Mammary epithelial cell (primary cell): ENCODE measurements at regions of chr1 and their contacts with region 1.

Region 1: GRCh38 chr1:231590453-231591198 is 36.0 kb upstream of the DISC1 start:
- DNase-seq: peak; percentile 51
- H3K4me3 ChIP-seq: no peak overlapping the region
- H3K27ac ChIP-seq: no peak overlapping the region
- H3K4me1 ChIP-seq: no peaks in the 10 kb centered on the region
- H3K27me3 ChIP-seq: no peaks in the 10 kb centered on the region
- CTCF ChIP-seq: peak; percentile 71 to 80

Region 2: GRCh38 chr1:231315887-231316286 is 274.7 kb before region 1 on chr1:
- CTCF ChIA-PET with region 1: no interaction called
- dilution Hi-C with region 1: no loop called
- in situ Hi-C with region 1: no loop called
- intact Hi-C with region 1: loop called (anchors 1 kb)
- DNase-seq: peak; percentile 8
- H3K4me3 ChIP-seq: no peak overlapping the region
- H3K27ac ChIP-seq: no peak overlapping the region
- H3K4me1 ChIP-seq: no peaks in the 10 kb centered on the region
- H3K27me3 ChIP-seq: no peaks in the 10 kb centered on the region
- CTCF ChIP-seq: peak; percentile 35 to 67

Region 3: DNA sequence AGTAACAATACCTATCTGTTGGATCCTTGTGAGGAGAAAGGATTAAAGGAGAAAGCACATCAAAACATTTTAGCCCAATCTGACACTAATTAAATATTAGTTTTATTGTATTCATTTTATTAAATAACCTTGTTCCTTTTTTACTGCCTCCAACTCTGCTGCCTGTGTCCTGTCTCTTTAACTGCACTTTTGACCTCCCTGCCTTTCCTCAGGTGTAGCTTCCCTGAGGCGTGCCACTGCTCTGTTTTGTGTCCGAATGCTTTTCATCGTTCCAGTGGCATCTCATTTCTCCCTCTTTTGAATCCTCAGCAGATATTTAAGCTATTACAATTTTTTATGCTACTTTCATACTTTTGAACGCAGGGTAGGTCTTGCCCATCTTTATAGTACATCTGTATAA is 242.2 kb before region 1 on chr1:
- CTCF ChIA-PET with region 1: no interaction called
- dilution Hi-C with region 1: no loop called
- in situ Hi-C with region 1: loop called in 1 of 2 experiments (anchors 5 kb)
- intact Hi-C with region 1: no loop called
- DNase-seq: no peak
- H3K4me3 ChIP-seq: no peak overlapping the region
- H3K27ac ChIP-seq: no peak overlapping the region
- H3K4me1 ChIP-seq: no peaks in the 10 kb centered on the region
- H3K27me3 ChIP-seq: no peaks in the 10 kb centered on the region
- CTCF ChIP-seq: no peak

Region 4: DNA sequence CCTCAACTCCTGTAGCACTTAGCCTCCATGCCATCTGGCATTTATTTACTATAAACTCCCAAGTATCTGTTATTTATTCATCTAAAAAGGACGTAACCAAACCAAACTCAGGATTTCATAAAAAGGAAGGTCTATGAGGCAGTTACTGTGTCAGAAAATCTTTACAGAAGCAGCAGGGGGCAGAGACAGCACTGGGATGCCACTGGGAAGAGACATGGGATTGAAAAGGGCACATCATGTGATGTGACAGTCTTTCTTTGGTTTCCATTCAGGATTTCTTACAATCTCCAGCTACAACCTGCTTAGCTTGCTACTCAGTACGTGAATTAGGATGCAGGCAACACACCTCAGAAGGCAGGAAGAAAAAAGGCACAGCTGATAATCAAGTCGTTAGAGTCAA is 221.3 kb before region 1 on chr1:
- CTCF ChIA-PET with region 1: no interaction called
- dilution Hi-C with region 1: no loop called
- in situ Hi-C with region 1: no loop called
- intact Hi-C with region 1: loop called (anchors 1 kb)
- DNase-seq: no peak
- H3K4me3 ChIP-seq: no peak overlapping the region
- H3K27ac ChIP-seq: no peak overlapping the region
- H3K4me1 ChIP-seq: no peaks in the 10 kb centered on the region
- H3K27me3 ChIP-seq: no peaks in the 10 kb centered on the region
- CTCF ChIP-seq: peak in 1 of 2 donors; percentile 28

Region 5: DNA sequence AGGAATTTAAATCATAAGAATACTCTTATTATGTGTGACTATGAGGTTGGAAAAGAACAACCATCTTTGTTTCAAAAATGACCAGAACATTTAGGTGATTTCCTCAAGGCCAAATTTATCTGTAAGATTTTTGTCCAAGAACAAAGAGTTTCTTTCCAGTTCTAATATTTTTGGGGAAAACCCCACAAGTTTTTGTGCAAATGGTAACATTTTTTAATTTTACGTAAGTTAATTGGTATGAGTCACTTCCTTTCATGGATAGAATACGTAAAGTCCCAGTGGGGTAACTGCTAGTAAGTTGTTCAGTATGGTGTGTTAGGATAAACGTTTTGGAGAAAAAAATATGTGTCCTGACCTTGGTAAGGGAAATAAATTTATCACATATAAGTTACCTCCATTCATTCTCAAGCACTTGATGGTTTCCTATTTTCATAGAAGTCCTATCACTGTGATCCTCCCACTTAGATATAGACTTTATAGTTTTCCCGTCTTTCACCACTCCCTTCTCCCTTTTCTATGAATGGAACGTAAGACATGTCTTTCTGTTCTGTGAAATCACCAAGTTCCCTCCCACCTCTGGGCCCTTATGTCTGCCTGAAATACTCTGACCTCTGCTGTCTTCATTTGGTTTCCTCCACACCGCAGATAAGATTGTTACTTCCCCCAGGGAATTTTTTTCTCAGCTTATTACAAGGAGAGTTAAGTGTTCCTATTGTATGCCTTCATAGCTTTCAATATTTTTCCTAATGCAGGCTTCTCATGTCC is 97.0 kb before region 1 on chr1:
- CTCF ChIA-PET with region 1: no interaction called
- dilution Hi-C with region 1: no loop called
- in situ Hi-C with region 1: no loop called
- intact Hi-C with region 1: no loop called
- DNase-seq: peak; percentile 29
- H3K4me3 ChIP-seq: no peak overlapping the region
- H3K27ac ChIP-seq: no peak overlapping the region
- H3K4me1 ChIP-seq: no peaks in the 10 kb centered on the region
- H3K27me3 ChIP-seq: no peaks in the 10 kb centered on the region
- CTCF ChIP-seq: no peak

Region 6: GRCh38 chr1:231702801-231703395 is 112.3 kb after region 1 on chr1:
- CTCF ChIA-PET with region 1: no interaction called
- dilution Hi-C with region 1: no loop called
- in situ Hi-C with region 1: no loop called
- intact Hi-C with region 1: no loop called
- DNase-seq: peak; percentile 3
- H3K4me3 ChIP-seq: no peak overlapping the region
- H3K27ac ChIP-seq: no peak overlapping the region
- H3K4me1 ChIP-seq: no peaks in the 10 kb centered on the region
- H3K27me3 ChIP-seq: no peaks in the 10 kb centered on the region
- CTCF ChIP-seq: no peak